PC-9 (cell line): ENCODE measurements at regions of chr6 and their contacts with region 1.

Region 1: DNA sequence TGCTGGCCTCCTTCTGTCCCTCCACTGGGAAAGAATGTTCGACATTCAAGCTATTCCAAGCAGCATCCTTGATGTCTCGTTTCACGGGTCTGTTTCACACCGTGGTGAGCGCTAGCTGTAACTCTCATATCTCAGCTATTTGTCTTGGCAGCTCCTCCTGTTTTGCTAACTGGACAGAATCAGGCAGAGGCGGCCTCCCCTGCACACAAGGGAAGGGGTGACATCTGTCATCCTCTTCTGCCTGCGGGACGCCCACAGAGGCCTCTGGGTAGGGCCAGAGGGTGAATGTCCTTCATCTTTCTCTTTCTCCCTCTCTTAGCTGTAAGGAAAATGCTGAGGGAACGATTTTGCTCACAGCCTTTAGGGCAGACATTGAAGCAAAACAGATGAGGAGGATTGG is 232.8 kb upstream of the GMDS start:
- DNase-seq: no peak
- H3K4me3 ChIP-seq: no peak overlapping the region
- H3K27ac ChIP-seq: no peak overlapping the region
- H3K4me1 ChIP-seq: peaks cover 11% of the 10 kb centered on the region
- H3K27me3 ChIP-seq: no peaks in the 10 kb centered on the region
- CTCF ChIP-seq: no peak

Region 2: DNA sequence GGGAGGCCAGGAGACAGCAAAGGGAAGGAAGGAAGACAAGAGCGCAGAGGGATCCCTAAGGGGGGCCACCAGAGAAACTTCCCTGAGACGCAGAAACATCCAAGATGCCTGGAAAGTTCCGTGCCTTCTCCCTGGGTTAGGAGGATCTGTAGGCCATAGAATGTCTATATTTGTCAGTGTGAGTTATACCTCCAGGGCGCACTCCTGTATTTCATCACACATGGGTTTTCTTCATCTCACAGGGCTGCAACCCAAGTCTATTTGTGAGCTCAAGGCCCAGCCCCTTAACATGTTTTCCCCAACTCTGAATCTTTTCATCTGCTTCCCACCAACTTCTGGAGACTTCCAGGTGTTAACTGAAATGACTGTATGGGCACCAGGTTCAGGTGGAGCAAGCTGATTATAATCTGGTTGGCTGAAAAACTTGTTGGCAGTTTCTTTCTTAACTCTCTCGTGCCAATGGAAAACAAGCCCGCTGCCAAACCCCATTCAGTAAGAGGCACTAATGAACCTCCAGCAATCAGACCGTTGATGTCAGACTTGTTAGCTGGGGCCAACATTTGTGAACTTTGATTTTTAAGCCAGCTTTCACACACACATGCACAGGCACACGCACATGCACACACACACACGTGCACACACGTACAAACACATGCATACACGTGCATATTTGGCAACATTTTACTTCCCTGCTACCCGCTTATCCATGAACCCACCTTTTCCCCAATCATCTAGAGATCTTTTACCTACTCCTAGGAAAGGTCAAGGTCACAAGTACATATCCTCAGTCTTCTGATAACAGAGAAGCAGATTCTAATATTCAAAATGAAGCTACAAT is 14.7 kb after region 1 on chr6:
- CTCF ChIA-PET with region 1: no interaction called
- POLR2A ChIA-PET with region 1: no interaction called
- intact Hi-C with region 1: no loop called
- DNase-seq: no peak
- H3K4me3 ChIP-seq: no peak overlapping the region
- H3K27ac ChIP-seq: no peak overlapping the region
- H3K4me1 ChIP-seq: no peaks in the 10 kb centered on the region
- H3K27me3 ChIP-seq: no peaks in the 10 kb centered on the region
- CTCF ChIP-seq: no peak

Region 3: DNA sequence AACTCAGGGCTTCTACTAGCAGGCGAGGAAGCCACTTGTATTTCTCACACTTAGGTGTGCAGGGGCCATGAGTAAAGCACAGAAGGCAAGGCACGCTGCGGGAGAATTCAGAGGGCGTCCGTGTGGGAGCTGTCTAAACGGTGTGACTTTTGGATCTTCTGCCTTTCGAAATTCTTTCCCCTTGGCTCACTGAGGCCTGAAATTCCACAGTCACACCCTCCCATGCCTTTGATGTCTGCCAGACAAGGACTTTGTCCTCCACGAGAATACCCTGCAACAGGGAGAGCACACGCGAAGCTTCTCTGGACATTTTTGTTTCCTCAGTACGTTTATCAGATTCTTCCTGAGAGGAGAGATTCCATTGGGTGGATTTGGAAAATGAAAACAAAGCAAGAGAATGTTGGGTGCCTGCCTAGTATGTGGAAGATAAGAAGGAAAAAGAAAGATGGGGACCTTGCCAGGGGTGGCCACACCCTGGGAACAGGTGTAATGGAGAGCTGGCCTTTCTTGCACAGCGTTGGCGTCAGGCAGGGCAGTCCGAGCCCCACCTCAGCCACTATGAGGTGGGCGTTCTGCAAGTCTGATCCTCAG is 36.9 kb after region 1 on chr6:
- CTCF ChIA-PET with region 1: no interaction called
- POLR2A ChIA-PET with region 1: no interaction called
- intact Hi-C with region 1: loop called (anchors 5 kb)
- DNase-seq: peak in 1 of 2 experiments; percentile 5
- H3K4me3 ChIP-seq: no peak overlapping the region
- H3K27ac ChIP-seq: no peak overlapping the region
- H3K4me1 ChIP-seq: no peaks in the 10 kb centered on the region
- H3K27me3 ChIP-seq: no peaks in the 10 kb centered on the region
- CTCF ChIP-seq: no peak

Region 4: GRCh38 chr6:2542858-2543218 is 64.6 kb after region 1 on chr6:
- CTCF ChIA-PET with region 1: no interaction called
- POLR2A ChIA-PET with region 1: no interaction called
- intact Hi-C with region 1: loop called (anchors 2 kb)
- DNase-seq: peak; percentile 53 to 86
- H3K4me3 ChIP-seq: no peak overlapping the region
- H3K27ac ChIP-seq: peak overlapping the region; percentile 71
- H3K4me1 ChIP-seq: peaks cover 33% of the 10 kb centered on the region
- H3K27me3 ChIP-seq: no peaks in the 10 kb centered on the region
- CTCF ChIP-seq: no peak